Left cardiac atrium (tissue), 4 donors: ENCODE measurements at regions of chr7 and their contacts with region 1.

Region 1: GRCh38 chr7:157273208-157274093 is 63.4 kb upstream of the DNAJB6 start:
- DNase-seq: peak; percentile 77
- ATAC-seq: peak; percentile 77 to 82

Region 2: GRCh38 chr7:157138424-157139110 is 134.9 kb before region 1 on chr7 and contains the start of gene UBE3C:
- intact Hi-C with region 1: no loop called
- DNase-seq: peak; percentile 93
- ATAC-seq: peak; percentile 95 to 96
- total RNA-seq, gene UBE3C: 46.1 to 55.4 TPM

Region 3: GRCh38 chr7:157318012-157318709 is 44.7 kb after region 1 on chr7:
- intact Hi-C with region 1: no loop called
- DNase-seq: no peak
- ATAC-seq: peak in 1 of 2 donors; percentile 66

Region 4: GRCh38 chr7:157397731-157398691 is 124.6 kb after region 1 on chr7:
- intact Hi-C with region 1: loop called in 1 of 2 experiments (anchors 10 kb)
- DNase-seq: peak; percentile 74
- ATAC-seq: peak; percentile 68 to 75